OCI-LY7 (cell line): ENCODE measurements at regions of chr1 and their contacts with region 1.

Region 1: GRCh38 chr1:198620951-198621824 is 17.7 kb upstream of the PTPRC start:
- DNase-seq: peak; percentile 97
- H3K4me3 ChIP-seq: peak overlapping the region; percentile 65
- H3K27ac ChIP-seq: peak overlapping the region; percentile 98
- H3K4me1 ChIP-seq: peaks cover 81% of the 10 kb centered on the region
- CTCF ChIP-seq: no peak; the same call in 1 of the 2 replicates

Region 2: DNA sequence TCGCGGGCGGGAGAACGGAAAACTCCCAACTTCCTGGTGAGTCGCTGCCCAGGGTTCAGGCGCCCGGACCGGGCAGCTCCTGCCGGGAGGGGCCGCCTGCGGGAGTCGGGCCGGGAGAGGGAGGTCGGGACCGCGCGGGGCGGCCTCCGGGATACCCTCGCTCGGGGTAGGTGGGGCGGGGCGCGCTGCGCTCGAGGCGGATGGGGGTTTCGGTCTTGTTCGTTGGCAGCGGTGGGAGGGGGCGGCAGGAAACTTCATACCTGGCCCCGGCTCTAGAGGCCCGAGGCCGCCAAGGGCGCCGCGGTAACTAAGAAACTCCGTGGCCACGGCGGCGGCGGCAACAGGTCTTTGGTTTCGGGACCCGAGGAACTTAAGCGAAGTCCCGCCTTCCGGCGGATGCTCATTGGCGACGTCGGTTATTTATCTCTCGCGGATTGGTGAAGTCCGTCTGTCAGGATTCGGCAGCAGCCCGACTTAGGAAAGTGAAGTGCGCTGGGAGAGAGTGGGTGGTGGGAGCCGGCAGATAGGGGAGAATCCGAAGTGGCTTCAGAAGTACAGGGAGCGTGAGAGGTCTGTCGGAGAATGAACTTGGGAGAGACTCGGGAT is 463.8 kb before region 1 on chr1:
- CTCF ChIA-PET with region 1: no interaction called
- POLR2A ChIA-PET with region 1: interaction called, 7 read pairs
- intact Hi-C with region 1: loop called (anchors 5 kb)
- DNase-seq: peak; percentile 91
- H3K4me3 ChIP-seq: peak overlapping the region; percentile 97
- H3K27ac ChIP-seq: peak overlapping the region; percentile 70
- H3K4me1 ChIP-seq: peaks cover 30% of the 10 kb centered on the region
- CTCF ChIP-seq: no peak

Region 3: GRCh38 chr1:198598796-198599321 is 22.3 kb before region 1 on chr1:
- CTCF ChIA-PET with region 1: interaction called, 7 read pairs
- POLR2A ChIA-PET with region 1: interaction called, 206 read pairs
- intact Hi-C with region 1: loop called (anchors 1 kb)
- DNase-seq: peak; percentile 99
- H3K4me3 ChIP-seq: peak overlapping the region; percentile 76
- H3K27ac ChIP-seq: peak overlapping the region; percentile 90
- H3K4me1 ChIP-seq: peaks cover 53% of the 10 kb centered on the region
- CTCF ChIP-seq: 0 out of 2 replicates have a peak, but pooled peaks have one; percentile 14

Region 4: DNA sequence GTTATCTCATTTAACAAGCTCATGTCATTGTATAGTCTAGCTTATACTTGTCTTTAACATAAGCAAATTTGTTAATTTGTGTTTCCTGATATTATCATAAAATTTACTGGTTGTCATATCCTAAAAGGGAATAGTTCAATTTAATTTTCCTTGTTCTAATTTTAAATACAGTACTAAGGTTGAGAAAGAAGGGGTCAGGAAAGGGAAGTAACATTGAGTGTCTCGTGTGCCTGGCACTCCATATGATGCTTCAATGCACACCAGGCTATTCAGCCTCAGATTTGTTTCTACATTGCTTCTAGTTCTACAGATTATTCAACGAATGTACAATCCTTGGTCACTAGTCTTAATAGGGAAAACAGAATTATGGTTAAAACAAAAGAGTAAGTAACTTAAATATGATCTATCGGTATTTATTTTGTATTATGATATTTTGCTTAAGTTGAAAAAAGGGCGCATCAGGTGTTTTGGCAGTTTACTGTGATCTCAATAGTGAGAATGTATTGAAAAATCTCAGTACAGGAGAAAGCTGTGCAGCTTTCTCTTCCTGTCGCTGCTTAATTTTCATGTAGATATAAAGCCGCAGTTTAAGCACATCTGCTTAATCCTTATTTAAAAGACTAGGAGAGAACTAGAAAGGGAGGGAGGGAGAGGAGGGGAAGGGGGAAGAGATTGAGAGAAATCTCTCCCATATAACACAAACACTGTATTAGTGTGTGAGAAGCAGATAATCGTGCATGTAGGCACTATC is 30.6 kb after region 1 on chr1:
- CTCF ChIA-PET with region 1: interaction called, 5 read pairs
- POLR2A ChIA-PET with region 1: interaction called, 87 read pairs
- intact Hi-C with region 1: loop called (anchors 1 kb)
- DNase-seq: peak; percentile 65
- H3K4me3 ChIP-seq: peak overlapping the region; percentile 62
- H3K27ac ChIP-seq: peak overlapping the region; percentile 87
- H3K4me1 ChIP-seq: peaks cover 98% of the 10 kb centered on the region
- CTCF ChIP-seq: no peak

Region 5: GRCh38 chr1:198693321-198693720 is 72.1 kb after region 1 on chr1:
- CTCF ChIA-PET with region 1: interaction called, 6 read pairs
- POLR2A ChIA-PET with region 1: interaction called, 39 read pairs
- intact Hi-C with region 1: no loop called
- DNase-seq: no peak
- H3K4me3 ChIP-seq: no peak overlapping the region
- H3K27ac ChIP-seq: no peak overlapping the region
- H3K4me1 ChIP-seq: peaks cover 27% of the 10 kb centered on the region
- CTCF ChIP-seq: no peak

Region 6: GRCh38 chr1:198725090-198725489 is 103.9 kb after region 1 on chr1:
- CTCF ChIA-PET with region 1: no interaction called
- POLR2A ChIA-PET with region 1: no interaction called
- intact Hi-C with region 1: no loop called
- DNase-seq: no peak
- H3K4me3 ChIP-seq: no peak overlapping the region
- H3K27ac ChIP-seq: no peak overlapping the region
- H3K4me1 ChIP-seq: no peaks in the 10 kb centered on the region
- CTCF ChIP-seq: no peak

Region 7: DNA sequence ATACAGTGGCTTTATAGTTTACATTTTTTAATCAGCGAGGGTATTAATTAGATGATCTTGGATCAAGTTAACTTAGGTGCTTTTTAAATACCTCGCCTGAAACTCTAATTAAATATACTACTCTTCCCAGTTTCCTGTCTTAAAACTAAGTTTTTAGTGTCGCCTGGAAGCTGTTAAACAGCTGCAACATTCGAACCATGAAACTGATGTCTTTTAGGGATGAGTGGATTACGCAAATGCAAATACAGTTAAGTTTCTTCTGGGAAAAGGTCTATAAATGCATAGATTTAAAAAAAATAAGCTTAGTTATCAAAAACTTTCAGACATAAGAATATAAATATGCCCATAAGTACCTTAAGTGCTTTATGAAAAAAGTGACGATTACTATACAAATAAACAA is 246.0 kb after region 1 on chr1:
- CTCF ChIA-PET with region 1: no interaction called
- POLR2A ChIA-PET with region 1: no interaction called
- intact Hi-C with region 1: no loop called
- DNase-seq: no peak
- H3K4me3 ChIP-seq: no peak overlapping the region
- H3K27ac ChIP-seq: no peak overlapping the region
- H3K4me1 ChIP-seq: no peaks in the 10 kb centered on the region
- CTCF ChIP-seq: no peak